Mammary epithelial cell (primary cell): ENCODE measurements at regions of chr7 and their contacts with region 1.

Region 1: GRCh38 chr7:17159500-17160037 is 138.9 kb upstream of the AHR start:
- DNase-seq: no peak
- H3K4me3 ChIP-seq: no peak overlapping the region
- H3K27ac ChIP-seq: no peak overlapping the region
- H3K4me1 ChIP-seq: no peaks in the 10 kb centered on the region
- H3K27me3 ChIP-seq: no peaks in the 10 kb centered on the region
- CTCF ChIP-seq: no peak

Region 2: DNA sequence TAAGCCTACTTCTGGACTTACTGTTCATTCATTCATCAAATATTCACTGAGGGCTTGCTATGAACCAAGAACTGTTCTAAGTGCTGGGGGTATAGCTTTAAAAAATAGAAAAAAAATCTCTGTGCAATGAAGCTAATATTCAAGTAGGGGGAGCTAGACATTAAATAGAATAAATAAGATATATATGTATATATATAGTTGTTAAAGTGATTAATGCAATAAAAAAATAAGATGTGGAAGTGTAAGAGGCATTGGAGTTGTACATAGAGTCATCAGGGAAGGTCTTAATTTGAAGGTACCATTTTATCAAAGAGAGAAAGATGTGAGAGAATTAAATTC is 96.6 kb before region 1 on chr7:
- CTCF ChIA-PET with region 1: no interaction called
- dilution Hi-C with region 1: no loop called
- in situ Hi-C with region 1: no loop called
- intact Hi-C with region 1: loop called (anchors 5 kb)
- DNase-seq: no peak
- H3K4me3 ChIP-seq: no peak overlapping the region
- H3K27ac ChIP-seq: no peak overlapping the region
- H3K4me1 ChIP-seq: peaks cover 1% of the 10 kb centered on the region
- H3K27me3 ChIP-seq: no peaks in the 10 kb centered on the region
- CTCF ChIP-seq: peak; percentile 37 to 46

Region 3: GRCh38 chr7:17130281-17131059 is 29.1 kb before region 1 on chr7:
- CTCF ChIA-PET with region 1: no interaction called
- dilution Hi-C with region 1: no loop called
- in situ Hi-C with region 1: no loop called
- intact Hi-C with region 1: no loop called
- DNase-seq: no peak
- H3K4me3 ChIP-seq: no peak overlapping the region
- H3K27ac ChIP-seq: no peak overlapping the region
- H3K4me1 ChIP-seq: no peaks in the 10 kb centered on the region
- H3K27me3 ChIP-seq: no peaks in the 10 kb centered on the region
- CTCF ChIP-seq: no peak